ENCODE measurements at regions of chr10 and their contacts with region 1.

Region 1: GRCh38 chr10:103592186-103593021 is 98.9 kb downstream of the NEURL1 start:
- DNase-seq: peak; percentile 74
- H3K4me3 ChIP-seq: no peak overlapping the region
- H3K27ac ChIP-seq: no peak overlapping the region
- H3K4me1 ChIP-seq: no peaks in the 10 kb centered on the region
- CTCF ChIP-seq: peak; percentile 88

Region 2: DNA sequence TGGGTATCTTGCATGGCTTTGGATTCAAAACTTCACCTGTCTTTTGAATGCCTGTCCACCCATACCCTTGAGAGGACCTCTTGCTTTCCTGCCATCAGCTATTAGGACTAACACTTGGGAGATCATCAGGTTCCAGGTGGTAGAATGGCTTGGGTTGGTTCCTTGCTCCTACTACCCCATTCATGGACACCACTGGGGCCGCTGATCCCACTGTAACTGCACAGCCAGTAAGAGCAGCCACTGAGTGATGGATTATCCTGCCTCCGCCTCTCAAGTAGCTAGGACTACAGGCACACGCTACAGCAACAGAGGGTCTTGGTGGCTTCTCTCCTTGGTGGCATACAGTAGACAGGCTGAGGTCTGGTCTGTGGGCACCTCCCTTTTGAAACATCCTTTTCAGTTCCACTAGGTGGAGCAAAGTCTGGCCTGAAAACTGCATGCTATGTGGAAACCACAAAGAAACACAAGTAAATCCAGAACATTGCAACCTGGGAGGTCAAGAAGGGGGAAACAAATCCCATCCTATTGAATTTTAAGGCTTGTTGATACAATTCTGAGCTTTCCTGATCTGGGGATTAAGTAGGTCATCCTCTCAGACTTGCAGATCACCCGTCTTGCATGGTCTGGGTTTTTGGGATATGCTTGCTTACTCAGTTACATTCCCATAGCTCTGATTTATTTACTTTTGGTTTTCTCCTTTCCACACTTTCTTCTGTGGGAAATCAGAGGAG is 839.3 kb before region 1 on chr10:
- CTCF ChIA-PET with region 1: no interaction called
- POLR2A ChIA-PET with region 1: no interaction called
- intact Hi-C with region 1: no loop called
- DNase-seq: peak; percentile 56
- H3K4me3 ChIP-seq: no peak overlapping the region
- H3K27ac ChIP-seq: no peak overlapping the region
- H3K4me1 ChIP-seq: peaks cover 4% of the 10 kb centered on the region
- CTCF ChIP-seq: peak; percentile 83

Region 3: DNA sequence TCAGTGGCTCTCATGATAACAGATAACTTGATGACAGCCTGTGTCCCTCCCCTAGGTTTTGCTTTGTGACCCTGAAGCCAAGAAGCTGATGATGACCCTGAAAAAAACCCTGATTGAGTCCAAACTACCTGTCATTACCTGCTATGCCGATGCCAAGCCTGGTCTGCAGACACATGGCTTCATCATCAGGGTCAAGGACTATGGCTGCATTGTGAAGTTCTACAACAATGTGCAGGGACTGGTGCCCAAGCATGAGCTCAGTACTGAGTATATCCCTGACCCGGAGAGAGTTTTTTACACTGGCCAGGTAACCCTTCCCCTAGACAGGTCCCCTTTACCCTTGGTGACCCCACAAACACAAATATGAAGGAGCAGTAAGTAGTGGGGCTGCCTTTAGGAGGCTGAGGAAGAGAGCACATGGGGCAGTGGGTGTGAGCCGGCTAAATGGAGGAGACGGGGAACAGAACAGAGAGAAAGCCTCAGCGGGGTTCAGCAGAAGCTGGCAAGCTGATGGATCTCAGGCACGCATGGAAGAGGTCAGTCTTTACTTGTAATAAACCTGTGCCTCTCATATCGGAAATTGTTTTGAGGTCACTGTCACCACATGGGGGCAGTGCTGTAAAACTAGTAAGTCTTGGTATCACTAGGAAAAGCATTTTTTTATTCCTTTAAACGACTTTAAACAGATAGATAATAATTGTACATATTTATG is 175.8 kb before region 1 on chr10:
- CTCF ChIA-PET with region 1: interaction called, 3 read pairs
- POLR2A ChIA-PET with region 1: no interaction called
- intact Hi-C with region 1: loop called (anchors 2 kb)
- DNase-seq: peak; percentile 79
- H3K4me3 ChIP-seq: no peak overlapping the region
- H3K27ac ChIP-seq: no peak overlapping the region
- H3K4me1 ChIP-seq: no peaks in the 10 kb centered on the region
- CTCF ChIP-seq: peak; percentile 90

Region 4: DNA sequence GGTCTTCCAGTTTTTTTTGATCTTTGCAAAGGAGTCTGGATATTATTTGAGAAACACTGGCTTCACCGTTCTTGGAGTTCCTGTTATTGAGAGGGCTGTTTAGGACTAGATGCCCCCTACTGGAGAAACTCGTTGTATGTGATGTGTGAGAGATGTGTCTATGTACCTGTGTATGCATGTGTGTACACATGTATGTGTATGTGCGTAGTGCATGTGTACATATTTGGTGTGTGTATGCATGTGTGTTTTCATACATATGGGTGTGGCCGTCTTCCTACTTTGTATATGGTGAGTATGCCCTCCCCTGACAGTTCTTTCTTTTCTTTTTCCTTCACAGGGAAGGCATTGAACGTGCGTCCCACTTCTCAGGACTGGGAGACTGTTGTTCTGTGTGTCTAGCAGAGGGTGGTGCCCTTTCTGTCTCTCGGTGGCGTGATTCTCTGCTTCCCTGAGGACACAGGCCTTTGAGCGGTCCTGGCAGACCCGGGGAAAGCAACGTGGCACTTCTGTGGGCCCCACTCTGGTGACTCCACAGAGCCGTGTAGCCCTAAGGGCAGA is 110.4 kb before region 1 on chr10:
- CTCF ChIA-PET with region 1: interaction called, 3 read pairs
- POLR2A ChIA-PET with region 1: no interaction called
- intact Hi-C with region 1: loop called (anchors 2 kb)
- DNase-seq: peak; percentile 86
- H3K4me3 ChIP-seq: no peak overlapping the region
- H3K27ac ChIP-seq: no peak overlapping the region
- H3K4me1 ChIP-seq: peaks cover 10% of the 10 kb centered on the region
- CTCF ChIP-seq: peak; percentile 94

Region 5: DNA sequence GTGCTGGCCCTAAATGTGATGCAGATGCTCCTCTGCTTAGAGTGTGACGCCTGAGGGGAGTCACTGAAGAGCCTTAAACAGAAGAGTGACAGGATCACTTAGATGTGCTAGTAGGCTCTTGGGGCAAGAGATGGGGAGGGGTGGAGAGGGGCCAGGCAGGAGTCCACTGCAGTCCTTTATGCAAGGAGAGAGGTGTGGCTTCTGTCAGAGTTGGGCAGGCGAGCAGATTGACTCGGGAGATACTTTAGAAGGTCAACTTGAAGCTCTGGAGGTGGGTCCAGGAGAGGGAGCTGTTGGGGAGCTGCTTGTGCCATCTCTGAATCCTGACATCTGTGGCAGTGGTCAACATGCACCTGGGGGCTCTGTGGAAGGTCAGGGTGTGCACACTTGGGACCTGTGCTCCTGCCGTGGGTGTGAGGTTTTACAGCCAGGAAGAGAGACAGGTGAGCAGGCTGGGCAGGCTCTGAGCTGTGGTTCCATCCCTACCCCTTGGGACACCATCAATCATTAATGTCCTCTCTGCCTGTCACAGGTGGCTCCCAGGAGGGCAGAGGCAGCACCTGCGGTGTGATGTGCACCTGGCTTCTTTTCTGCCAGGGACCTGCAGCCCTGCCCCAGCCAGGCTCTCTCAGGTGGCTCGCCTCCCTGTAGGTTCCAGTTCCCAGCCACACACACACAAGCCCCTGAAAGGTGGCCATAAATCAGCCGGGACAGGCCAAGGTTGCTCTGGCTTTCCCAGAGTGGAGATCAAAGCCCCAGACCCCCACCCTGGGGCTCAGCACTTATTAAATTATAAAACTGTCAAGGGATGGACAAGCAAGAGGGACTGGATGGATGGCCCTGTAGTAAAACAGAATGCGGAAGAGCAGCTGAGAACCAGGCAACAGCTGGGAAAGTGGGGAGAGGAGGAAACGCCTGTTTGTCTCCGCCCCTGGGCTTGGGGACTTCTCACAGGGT is 84.9 kb before region 1 on chr10:
- CTCF ChIA-PET with region 1: no interaction called
- POLR2A ChIA-PET with region 1: no interaction called
- intact Hi-C with region 1: loop called (anchors 1 kb)
- DNase-seq: peak; percentile 85
- H3K4me3 ChIP-seq: no peak overlapping the region
- H3K27ac ChIP-seq: peak overlapping the region; percentile 4
- H3K4me1 ChIP-seq: peaks cover 19% of the 10 kb centered on the region
- CTCF ChIP-seq: peak; percentile 57; the same call in 1 of the 2 replicates

Region 6: DNA sequence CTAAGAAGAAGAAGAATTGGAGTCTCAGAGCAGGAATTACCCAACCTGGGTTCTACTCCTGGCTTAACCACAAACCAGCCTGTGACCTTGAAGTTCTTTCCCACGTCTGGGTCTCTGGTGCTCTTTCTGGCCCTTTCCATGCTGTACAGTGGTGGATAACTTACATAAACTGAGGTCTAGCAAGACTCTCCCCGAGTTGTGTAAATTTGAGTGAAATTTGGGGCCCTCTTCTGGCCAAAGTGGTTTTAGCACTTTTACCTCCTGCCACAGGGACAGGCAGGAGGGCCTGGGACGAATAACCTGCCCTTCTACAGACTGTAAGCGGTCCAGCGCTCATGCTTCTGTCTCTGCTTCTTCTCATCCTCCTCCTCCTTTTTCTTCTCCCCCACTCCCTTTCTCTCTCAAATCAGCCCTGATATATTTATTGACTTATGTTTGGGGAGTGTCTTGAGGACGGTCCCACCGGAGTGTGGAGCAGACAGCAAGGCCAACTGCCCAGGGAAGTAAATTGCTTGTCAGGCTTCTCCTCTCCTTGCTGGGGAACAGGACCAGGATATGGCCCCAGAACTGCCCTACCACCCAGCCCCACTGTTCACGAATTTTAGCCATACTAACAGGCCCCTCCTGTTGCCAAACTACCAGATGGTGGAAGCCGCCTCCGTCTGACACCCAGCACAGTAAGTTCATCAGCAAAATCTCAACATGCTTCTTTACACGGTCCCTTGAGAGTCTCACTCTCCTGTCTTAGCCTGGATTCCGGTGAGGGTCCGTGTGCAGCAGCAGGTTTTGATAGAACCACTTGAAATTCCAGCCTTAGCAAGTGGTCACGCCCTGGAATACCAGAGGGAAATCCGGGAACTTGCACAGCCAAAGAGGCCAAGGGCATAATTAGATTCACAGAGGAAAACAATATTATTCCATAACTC is 267.0 kb after region 1 on chr10:
- CTCF ChIA-PET with region 1: no interaction called
- POLR2A ChIA-PET with region 1: no interaction called
- intact Hi-C with region 1: loop called (anchors 10 kb)
- DNase-seq: peak; percentile 72
- H3K4me3 ChIP-seq: no peak overlapping the region
- H3K27ac ChIP-seq: no peak overlapping the region
- H3K4me1 ChIP-seq: peaks cover 2% of the 10 kb centered on the region
- CTCF ChIP-seq: peak; percentile 85

Measured in OCI-LY7 (cell line).